Activated B cell treated with CpG ODN at 0.5 μM for 24 hours (primary cell): ENCODE measurements at regions of chr4 and their contacts with region 1.

Region 1: GRCh38 chr4:159018062-159018629 is 84.7 kb upstream of the RAPGEF2 start:
- DNase-seq: peak; percentile 39
- ATAC-seq: peak; percentile 91
- H3K4me3 Mint-ChIP-seq: peak overlapping the region; percentile 39
- H3K27ac Mint-ChIP-seq: no peak overlapping the region
- H3K4me1 Mint-ChIP-seq: peaks cover 16% of the 10 kb centered on the region
- H3K27me3 Mint-ChIP-seq: peaks cover 12% of the 10 kb centered on the region
- CTCF ChIP-seq: no peak

Region 2: GRCh38 chr4:158042591-158043030 is 975.5 kb before region 1 on chr4:
- CTCF ChIA-PET with region 1: no interaction called
- POLR2A ChIA-PET with region 1: no interaction called
- intact Hi-C with region 1: no loop called
- DNase-seq: no peak
- ATAC-seq: no peak
- H3K4me3 Mint-ChIP-seq: no peak overlapping the region
- H3K27ac Mint-ChIP-seq: no peak overlapping the region
- H3K4me1 Mint-ChIP-seq: no peaks in the 10 kb centered on the region
- H3K27me3 Mint-ChIP-seq: no peaks in the 10 kb centered on the region
- CTCF ChIP-seq: no peak

Region 3: DNA sequence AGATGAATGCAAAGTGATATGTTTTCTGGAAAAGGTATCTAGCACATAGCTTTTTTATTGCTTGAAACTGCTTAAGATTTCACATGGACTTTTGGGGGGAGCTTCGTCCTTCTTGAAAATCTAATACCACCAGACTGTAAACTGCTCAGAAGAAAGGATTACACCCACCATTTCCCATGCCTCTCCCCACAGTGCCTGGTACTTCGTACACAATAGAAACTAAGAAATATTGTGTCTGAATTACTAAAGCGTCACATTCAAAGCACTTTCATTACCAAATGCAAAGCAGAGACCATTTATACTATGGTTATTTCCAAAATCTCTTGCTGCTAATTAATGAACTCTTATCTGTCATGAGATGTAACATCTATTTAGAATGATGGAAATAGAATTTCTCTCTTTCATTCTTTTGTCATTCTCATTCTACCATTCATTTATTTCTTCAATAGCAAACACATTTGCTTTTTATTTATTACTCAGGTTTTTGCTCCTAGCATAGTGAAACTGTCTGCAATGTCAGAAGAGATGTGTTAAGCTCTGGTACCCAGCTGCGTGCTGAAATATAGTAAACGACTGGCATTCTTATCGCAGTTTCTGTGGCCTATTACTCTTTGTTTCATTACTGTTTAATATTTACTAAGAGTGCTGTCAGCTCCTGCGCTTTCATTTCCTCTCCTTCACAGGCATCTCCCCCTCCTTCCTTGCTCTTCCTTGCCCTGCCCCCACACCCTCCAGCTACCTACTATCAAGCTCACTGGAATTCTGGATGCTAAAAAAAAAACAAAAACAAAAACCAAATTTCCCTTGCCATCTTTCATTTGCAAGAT is 33.3 kb after region 1 on chr4:
- CTCF ChIA-PET with region 1: no interaction called
- POLR2A ChIA-PET with region 1: interaction called, 4 read pairs
- intact Hi-C with region 1: loop called (anchors 1 kb)
- DNase-seq: no peak
- ATAC-seq: peak; percentile 51
- H3K4me3 Mint-ChIP-seq: peak overlapping the region; percentile 56
- H3K27ac Mint-ChIP-seq: peak overlapping the region; percentile 63
- H3K4me1 Mint-ChIP-seq: peaks cover 19% of the 10 kb centered on the region
- H3K27me3 Mint-ChIP-seq: peaks cover 40% of the 10 kb centered on the region
- CTCF ChIP-seq: no peak

Region 4: DNA sequence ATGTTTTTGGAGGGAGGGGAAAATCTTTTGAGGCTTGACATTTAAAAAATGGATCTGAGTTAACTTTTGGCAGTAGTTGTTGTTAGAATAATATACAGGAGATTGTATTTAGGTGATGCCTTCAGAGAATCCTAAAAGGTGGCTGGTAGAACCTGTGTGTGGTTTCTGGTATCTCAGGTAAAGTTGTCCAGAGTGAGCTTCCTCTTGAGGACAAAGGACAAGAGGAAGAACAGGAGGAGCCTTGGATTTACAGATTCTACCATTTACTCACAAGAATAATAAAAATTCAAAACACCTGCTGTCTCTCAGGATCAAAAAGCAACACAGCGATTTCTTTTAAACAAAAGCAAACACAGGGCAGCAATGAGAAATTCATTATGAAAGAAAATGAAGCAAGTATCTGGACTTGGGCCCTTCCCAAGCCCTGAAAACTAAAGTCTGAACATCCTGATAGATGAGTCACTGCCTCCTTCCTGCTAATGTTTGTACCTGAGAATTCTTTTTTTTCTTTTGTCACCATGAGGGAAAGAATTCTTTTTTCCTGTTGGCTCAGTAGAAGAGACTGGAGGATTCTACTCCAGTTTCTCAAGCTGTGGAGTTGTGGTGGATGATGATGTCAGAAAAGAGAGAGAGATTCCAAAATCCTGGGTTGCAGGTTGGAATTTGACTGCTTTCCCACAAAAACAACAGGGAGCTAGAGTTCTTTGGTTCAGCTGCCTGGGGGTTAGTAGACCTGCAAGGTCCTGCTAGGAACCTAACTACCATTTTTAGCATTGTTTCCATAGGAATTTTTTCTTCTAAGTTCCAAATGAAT is 53.2 kb after region 1 on chr4:
- CTCF ChIA-PET with region 1: no interaction called
- POLR2A ChIA-PET with region 1: interaction called, 11 read pairs
- intact Hi-C with region 1: no loop called
- DNase-seq: no peak
- ATAC-seq: no peak
- H3K4me3 Mint-ChIP-seq: no peak overlapping the region
- H3K27ac Mint-ChIP-seq: no peak overlapping the region
- H3K4me1 Mint-ChIP-seq: peaks cover 8% of the 10 kb centered on the region
- H3K27me3 Mint-ChIP-seq: no peaks in the 10 kb centered on the region
- CTCF ChIP-seq: no peak